ENCODE measurements at regions of chr9 and their contacts with region 1.

Region 1: GRCh38 chr9:129900263-129901027 is 65.2 kb downstream of the USP20 start:
- DNase-seq: peak; percentile 17
- ATAC-seq: peak; percentile 95
- H3K4me3 Mint-ChIP-seq: peak overlapping the region; percentile 52
- H3K27ac Mint-ChIP-seq: peak overlapping the region; percentile 82
- H3K4me1 Mint-ChIP-seq: peaks cover 70% of the 10 kb centered on the region
- H3K27me3 Mint-ChIP-seq: no peaks in the 10 kb centered on the region
- CTCF ChIP-seq: no peak

Region 2: GRCh38 chr9:129401628-129402370 is 498.6 kb before region 1 on chr9:
- CTCF ChIA-PET with region 1: no interaction called
- POLR2A ChIA-PET with region 1: no interaction called
- intact Hi-C with region 1: no loop called
- DNase-seq: no peak
- ATAC-seq: no peak
- H3K4me3 Mint-ChIP-seq: no peak overlapping the region
- H3K27ac Mint-ChIP-seq: no peak overlapping the region
- H3K4me1 Mint-ChIP-seq: peaks cover 6% of the 10 kb centered on the region
- H3K27me3 Mint-ChIP-seq: peaks cover 3% of the 10 kb centered on the region
- CTCF ChIP-seq: no peak

Region 3: DNA sequence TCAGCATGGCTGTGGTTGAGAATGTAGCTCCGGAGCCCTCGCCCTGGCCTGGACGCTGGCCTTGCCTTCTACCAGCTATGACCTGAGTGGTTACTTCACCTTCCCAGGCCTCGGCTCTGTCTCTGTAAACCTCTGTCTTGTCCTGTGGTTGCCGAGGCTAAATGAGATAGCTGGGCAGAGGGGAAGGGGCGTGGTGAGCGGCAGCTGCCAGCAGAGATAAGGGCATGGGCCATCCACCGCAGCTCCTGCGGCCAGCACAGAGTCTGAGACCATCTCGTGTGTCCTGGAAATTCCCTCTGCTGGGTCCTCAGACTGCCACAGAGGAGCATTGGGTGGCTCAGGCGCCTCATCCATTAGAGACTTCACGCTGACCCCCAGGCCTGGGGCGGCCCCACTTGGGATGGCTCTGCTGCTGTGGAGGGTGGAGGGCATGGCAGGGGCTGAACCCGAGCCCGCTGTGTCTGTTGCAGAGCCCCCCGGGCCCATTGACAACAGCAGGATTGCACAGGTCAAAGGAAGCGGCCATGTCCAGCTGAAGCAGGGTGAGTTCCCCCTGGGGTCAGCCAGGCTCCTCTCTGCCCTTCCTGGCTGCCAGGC is 21.2 kb before region 1 on chr9:
- CTCF ChIA-PET with region 1: no interaction called
- POLR2A ChIA-PET with region 1: no interaction called
- intact Hi-C with region 1: no loop called
- DNase-seq: no peak
- ATAC-seq: no peak
- H3K4me3 Mint-ChIP-seq: no peak overlapping the region
- H3K27ac Mint-ChIP-seq: no peak overlapping the region
- H3K4me1 Mint-ChIP-seq: peaks cover 11% of the 10 kb centered on the region
- H3K27me3 Mint-ChIP-seq: no peaks in the 10 kb centered on the region
- CTCF ChIP-seq: no peak

Region 4: GRCh38 chr9:130235897-130236668 is 335.6 kb after region 1 on chr9:
- CTCF ChIA-PET with region 1: no interaction called
- POLR2A ChIA-PET with region 1: no interaction called
- intact Hi-C with region 1: loop called (anchors 5 kb)
- DNase-seq: peak; percentile 70
- ATAC-seq: no peak
- H3K4me3 Mint-ChIP-seq: no peak overlapping the region
- H3K27ac Mint-ChIP-seq: no peak overlapping the region
- H3K4me1 Mint-ChIP-seq: peaks cover 28% of the 10 kb centered on the region
- H3K27me3 Mint-ChIP-seq: peaks cover 3% of the 10 kb centered on the region
- CTCF ChIP-seq: peak; percentile 92

Measured in activated B cell treated with CpG ODN at 0.5 μM for 24 hours (primary cell).